ENCODE measurements at regions of chr6 and their contacts with region 1.

Region 1: GRCh38 chr6:13873285-13874190 is 51.2 kb upstream of the RNF182 start:
- DNase-seq: peak; percentile 5
- ATAC-seq: peak; percentile 87
- H3K4me3 ChIP-seq: peak overlapping the region; percentile 47; the same call in 1 of the 2 replicates
- H3K27ac ChIP-seq: no peak overlapping the region
- H3K4me1 ChIP-seq: peaks cover 5% of the 10 kb centered on the region
- H3K27me3 ChIP-seq: no peaks in the 10 kb centered on the region
- CTCF ChIP-seq: peak; percentile 72 to 80 (median 80)
- EP300 ChIP-seq: no peak
- POLR2A ChIP-seq: no peak
- RAD21 ChIP-seq: peak; percentile 67

Region 2: DNA sequence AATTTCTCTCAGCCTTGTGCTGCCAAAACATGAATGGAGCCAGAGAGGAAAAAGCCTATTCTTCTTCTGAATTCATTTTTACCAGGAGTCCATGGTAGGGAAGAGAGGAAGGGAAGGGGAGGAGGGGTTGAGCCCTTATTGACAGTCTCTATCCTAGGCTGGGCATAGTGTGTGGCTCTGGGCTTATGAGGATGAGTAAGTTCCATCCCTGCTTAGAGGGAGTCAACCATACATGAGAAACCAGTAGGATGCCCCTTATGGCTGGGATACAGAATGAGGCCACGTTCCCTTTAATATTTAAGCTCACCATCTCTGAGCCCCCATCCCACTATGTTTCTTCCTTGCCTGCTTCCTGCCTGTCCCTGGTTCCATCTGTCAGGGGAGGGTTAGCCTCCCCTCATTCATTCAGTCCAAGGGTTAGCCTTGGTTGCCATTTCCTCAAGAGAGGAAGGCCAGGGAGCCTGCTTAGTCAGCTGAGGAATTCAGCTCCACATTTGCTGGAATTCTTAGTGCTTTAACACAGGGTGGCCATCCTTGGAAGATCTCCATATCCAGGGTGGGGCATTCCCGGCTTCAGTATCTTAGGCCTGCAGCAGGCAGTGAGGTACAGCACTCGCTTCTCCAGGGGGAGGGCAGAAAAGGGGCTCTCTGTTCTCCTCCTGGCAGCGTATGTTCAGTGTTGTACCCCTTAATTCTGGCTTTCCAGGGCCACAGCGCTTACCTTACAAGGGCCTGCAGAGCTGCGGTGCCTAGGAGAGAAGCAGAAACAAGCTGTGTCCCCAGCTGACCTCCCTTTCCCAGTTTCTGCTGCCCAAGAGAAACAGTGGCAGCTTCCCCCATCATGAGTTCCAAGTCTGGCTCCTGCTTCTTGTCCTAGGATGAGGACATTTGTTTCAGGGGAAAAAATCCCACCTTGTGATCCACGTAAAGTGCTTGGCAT is 286.7 kb before region 1 on chr6:
- CTCF ChIA-PET with region 1: no interaction called
- POLR2A ChIA-PET with region 1: no interaction called
- RAD21 ChIA-PET with region 1: no interaction called
- SMC1A ChIA-PET with region 1: no interaction called
- in situ Hi-C with region 1: no loop called
- intact Hi-C with region 1: no loop called
- DNase-seq: no peak
- ATAC-seq: no peak
- H3K4me3 ChIP-seq: no peak overlapping the region
- H3K27ac ChIP-seq: no peak overlapping the region
- H3K4me1 ChIP-seq: no peaks in the 10 kb centered on the region
- H3K27me3 ChIP-seq: no peaks in the 10 kb centered on the region
- CTCF ChIP-seq: no peak
- EP300 ChIP-seq: no peak
- POLR2A ChIP-seq: no peak
- RAD21 ChIP-seq: no peak

Region 3: GRCh38 chr6:13883966-13884365 is 10.4 kb after region 1 on chr6:
- CTCF ChIA-PET with region 1: interaction called, 12 read pairs
- POLR2A ChIA-PET with region 1: no interaction called
- RAD21 ChIA-PET with region 1: no interaction called
- SMC1A ChIA-PET with region 1: no interaction called
- in situ Hi-C with region 1: no loop called
- intact Hi-C with region 1: no loop called
- DNase-seq: no peak
- ATAC-seq: no peak
- H3K4me3 ChIP-seq: no peak overlapping the region
- H3K27ac ChIP-seq: no peak overlapping the region
- H3K4me1 ChIP-seq: no peaks in the 10 kb centered on the region
- H3K27me3 ChIP-seq: no peaks in the 10 kb centered on the region; a peak in 1 of 4 replicates
- CTCF ChIP-seq: no peak
- EP300 ChIP-seq: no peak
- POLR2A ChIP-seq: no peak
- RAD21 ChIP-seq: no peak